KBM-7 (cell line): ENCODE measurements at regions of chr22 and their contacts with region 1.

Region 1: DNA sequence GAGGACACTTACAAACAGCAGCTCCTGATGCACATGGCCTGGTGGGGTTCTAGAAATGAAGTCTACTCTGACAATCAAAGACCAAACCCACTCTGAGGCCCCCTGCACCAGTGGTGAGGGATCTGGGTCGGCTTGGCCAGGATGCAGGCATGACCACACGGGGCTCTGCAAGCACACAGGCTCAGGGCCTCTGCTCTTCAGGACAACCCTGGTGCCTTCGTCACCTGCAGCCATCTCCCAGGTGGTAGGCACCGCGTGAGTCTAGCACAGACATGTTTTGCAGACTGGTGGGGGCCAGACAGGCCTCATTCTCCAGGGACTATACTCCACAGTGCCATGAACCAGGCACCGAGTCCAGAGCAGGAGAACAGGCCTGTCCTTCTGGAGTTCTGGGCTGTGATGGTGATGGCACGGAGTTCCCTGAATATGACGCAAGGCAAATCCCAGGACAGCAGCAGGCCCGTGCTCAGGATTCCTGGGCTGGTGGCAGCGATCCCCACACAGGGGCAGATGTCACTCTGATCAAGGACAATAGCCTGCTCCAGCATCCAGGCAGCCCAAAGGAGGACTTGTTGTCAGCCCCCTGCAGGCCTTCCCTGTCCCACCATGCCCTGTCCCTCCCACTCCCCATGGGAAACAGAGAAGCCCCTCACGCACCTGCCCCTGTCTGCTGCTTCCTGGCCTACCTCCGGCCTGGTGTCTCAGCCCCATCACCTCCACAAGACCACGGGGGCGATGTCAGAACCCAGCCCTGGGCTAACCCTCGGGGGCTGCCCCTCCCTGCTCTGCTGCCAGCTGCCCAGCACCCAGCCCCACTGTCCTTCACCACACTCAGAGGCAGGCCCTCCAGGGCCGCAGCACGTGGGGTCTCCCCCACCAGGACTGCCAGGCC is 36.1 kb downstream of the GNB1L start:
- DNase-seq: no peak

Region 2: GRCh38 chr22:19514831-19515565 is 303.6 kb before region 1 on chr22:
- in situ Hi-C with region 1: no loop called
- DNase-seq: no peak

Region 3: DNA sequence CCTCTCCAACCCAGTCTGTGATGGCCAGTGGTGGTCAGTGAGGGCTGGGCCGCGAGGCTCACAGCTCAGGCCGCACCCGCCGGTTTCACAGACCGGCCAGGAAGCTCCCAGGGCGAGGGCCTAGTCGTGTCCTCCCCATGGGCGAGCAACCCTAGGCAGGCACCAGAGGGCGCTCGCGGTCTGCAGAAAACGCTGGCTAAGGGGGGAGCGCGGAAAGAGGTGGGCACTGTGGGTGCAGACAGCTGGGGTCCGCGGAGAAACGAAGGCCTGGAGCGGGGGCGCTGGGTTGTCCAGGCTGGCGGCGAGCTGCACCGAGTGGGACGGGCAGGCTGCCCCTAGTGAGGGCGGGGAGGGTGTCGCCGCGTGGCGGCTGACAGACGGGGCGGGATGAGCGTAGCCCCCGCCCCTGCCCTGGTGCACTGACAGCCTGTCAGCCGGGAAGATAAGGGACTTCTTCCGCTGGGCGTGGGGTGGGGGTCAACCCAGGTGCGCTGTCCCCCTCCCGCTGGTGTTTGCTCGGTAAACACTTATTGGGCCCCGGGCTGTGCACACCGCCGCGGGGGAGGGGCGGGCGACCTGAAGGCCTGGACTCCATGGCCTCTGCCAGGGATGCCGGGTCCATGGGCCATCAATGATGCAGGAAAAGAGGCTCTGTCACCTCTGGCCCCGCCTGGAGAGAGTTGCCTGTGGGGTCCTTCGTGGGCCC is 87.8 kb before region 1 on chr22:
- in situ Hi-C with region 1: no loop called
- DNase-seq: peak; percentile 83

Region 4: DNA sequence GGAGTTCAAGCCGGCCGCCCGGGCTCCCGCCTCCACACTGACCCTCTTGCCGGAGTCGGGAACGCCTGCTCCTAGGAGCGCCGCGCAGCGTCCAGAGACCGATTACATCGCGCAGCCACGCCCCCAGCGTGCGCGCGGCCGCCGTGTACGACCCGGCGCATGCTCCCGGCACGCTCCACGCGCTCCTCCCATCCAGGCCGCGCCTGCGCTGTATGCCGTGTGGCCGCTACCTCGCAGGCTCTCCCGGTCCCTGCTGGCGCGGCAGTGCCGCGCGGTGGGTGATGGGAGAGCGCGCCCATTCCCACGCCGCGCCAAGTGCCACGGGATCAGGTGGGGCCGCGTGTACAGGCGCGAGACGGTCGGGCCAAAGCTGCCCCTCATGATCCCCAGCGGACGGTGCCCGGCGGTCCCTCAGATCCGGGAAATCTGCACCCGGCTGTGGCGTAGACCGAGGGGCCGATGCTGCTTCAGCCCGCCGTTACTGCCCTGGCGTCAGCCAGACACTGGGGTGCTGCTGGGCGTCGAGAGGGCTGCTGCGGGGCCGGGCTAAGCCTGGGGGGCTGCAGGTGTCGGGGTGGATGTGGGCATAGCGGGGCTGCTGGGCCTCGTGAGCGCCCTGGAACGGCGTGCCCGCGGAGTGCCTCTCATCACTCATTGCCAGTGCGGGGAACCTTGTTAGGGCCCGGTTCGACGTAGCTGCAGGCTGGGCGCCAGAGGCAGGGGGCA is 36.4 kb after region 1 on chr22 and contains the starts of genes GNB1L and RTL10:
- in situ Hi-C with region 1: loop called (anchors 5 kb)
- DNase-seq: peak; percentile 96

Region 5: DNA sequence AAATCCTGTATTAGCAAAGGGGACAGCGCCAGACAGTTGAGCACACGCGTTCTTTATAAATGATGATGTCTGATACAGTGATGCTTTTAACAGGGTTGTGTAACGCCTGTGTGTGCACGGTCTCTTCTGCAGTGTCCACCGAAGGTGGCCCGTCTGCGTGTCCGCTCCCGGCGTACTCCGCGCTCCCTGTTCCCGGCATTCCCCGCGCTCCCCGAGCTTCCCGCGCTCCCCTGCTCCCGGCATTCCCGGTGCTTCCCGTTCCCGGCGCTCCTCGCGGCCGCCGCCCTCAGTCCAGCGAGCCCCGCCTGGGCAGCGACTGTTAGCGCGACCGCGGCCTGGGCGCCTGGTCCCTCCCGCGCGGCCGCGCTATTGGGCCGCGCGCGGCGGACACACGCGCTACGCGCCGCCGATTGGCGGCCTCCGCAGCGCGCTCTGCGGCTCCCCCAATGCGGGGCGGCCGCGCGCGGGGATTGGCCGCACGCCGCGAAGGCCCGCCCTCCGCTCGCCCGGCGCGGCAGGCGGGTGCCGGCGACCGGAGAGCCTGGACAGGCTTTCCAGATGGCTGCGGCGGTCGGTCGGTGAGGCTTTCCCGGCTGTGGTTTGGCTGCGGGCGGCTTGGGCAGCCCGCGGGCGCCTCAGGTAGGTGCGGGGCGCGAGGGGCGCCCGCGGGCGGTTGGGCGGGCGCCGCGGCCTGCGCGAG is 261.3 kb after region 1 on chr22 and contains the start of gene DGCR8:
- in situ Hi-C with region 1: no loop called
- DNase-seq: peak; percentile 85